Activated naive CD4-positive, alpha-beta T cell treated with anti-CD3 and anti-CD28 coated beads for 36 hours (primary cell): ENCODE measurements at regions of chr1 and their contacts with region 1.

Region 1: DNA sequence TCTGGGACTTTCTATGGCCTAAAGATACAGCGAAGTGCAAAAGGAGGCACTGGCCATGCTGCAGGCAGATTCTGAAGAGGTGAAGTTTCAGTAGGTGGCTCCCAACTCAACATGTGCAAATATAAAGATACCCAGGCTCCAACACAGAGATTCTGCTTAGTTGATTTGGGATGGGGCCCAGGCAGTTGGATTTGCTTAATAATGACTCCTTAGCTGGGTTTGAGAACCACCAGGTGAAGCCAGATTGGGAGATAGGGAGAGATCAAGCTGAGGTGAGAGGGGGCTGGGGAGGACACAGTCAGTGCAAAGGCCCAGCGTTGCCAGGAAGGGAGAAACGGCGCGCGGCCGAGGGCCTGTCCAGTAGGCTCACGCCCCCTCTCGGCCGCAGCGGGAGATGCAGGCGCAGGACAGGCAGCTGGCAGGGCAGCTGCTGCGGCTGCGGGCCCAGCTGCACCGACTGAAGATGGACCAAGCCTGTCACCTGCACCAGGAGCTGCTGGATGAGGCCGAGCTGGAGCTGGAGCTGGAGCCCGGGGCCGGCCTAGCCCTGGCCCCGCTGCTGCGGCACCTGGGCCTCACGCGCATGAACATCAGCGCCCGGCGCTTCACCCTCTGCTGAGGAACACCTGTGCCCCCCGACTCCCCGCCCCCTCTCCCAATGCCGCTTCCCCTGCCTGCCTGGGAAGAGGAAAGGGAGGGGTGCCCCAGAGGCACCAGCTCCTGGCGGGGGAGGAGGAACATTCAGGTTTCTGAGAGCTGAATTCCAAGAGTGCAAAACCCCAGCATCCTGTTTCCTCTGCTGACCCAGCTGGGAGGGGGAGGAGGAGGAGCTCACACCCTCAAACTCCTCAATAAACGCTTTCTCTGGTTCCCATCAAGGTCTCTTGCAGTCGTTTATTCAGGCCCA is 1.2 kb downstream of the FAM167B start:
- DNase-seq: peak; percentile 87
- H3K4me3 Mint-ChIP-seq: peak overlapping the region; percentile 49
- H3K27ac Mint-ChIP-seq: peak overlapping the region; percentile 100
- H3K4me1 Mint-ChIP-seq: peaks cover 46% of the 10 kb centered on the region
- H3K27me3 Mint-ChIP-seq: no peaks in the 10 kb centered on the region

Region 2: GRCh38 chr1:31785020-31785946 is 463.0 kb before region 1 on chr1:
- CTCF ChIA-PET with region 1: no interaction called
- intact Hi-C with region 1: no loop called
- DNase-seq: no peak
- H3K4me3 Mint-ChIP-seq: no peak overlapping the region
- H3K27ac Mint-ChIP-seq: no peak overlapping the region
- H3K4me1 Mint-ChIP-seq: peaks cover 6% of the 10 kb centered on the region
- H3K27me3 Mint-ChIP-seq: no peaks in the 10 kb centered on the region

Region 3: GRCh38 chr1:31944205-31945089 is 303.8 kb before region 1 on chr1:
- CTCF ChIA-PET with region 1: no interaction called
- intact Hi-C with region 1: loop called (anchors 2 kb)
- DNase-seq: peak; percentile 91
- H3K4me3 Mint-ChIP-seq: peak overlapping the region; percentile 74
- H3K27ac Mint-ChIP-seq: peak overlapping the region; percentile 88
- H3K4me1 Mint-ChIP-seq: peaks cover 66% of the 10 kb centered on the region
- H3K27me3 Mint-ChIP-seq: no peaks in the 10 kb centered on the region

Region 4: DNA sequence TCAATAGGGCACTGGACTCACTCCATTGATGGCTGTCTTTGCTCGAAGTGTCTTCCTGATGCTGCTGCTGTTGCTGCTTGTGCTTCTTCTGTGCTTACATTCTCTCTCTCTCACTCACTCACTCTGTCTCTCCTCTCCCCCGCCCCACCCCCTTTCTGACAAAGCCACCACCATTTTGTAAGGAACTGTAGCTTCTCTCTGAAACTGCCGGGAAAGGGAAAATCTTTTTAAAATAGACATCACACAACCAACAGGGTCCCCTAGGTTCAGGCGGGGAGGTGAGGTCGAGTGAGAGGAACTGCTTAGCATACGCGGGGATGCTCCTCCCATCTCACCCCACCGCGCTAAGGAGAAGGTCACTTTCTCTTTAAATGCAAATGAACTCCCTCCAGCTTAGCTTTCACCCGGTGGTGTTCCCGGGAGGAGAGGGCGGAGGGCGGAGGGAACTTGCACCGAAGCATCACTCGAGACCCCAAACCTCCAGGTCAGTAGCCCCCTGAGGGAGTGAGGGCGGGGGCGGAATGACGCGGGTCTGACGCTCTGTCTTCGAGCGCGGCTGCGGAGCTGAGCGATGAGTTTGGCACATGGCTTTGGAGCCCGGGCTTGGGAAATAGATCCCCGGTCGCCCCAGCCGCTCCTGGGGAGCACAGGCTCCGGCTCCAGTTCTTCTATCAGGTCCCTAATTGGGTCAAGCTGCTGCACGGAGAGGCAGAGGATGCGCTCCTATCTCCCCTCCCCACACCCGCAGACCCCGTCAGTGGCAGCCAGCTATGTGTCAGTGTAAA is 47.8 kb before region 1 on chr1 and contains the start of gene CCDC28B:
- CTCF ChIA-PET with region 1: no interaction called
- intact Hi-C with region 1: loop called (anchors 1 kb)
- DNase-seq: peak; percentile 72
- H3K4me3 Mint-ChIP-seq: peak within 1 kb of the TSS; percentile 70
- H3K27ac Mint-ChIP-seq: peak within 1 kb of the TSS; percentile 88
- H3K4me1 Mint-ChIP-seq: peaks cover 38% of the 10 kb centered on the region
- H3K27me3 Mint-ChIP-seq: no peaks in the 10 kb centered on the region
- total RNA-seq, gene CCDC28B: 13.1 to 14.8 TPM

Region 5: DNA sequence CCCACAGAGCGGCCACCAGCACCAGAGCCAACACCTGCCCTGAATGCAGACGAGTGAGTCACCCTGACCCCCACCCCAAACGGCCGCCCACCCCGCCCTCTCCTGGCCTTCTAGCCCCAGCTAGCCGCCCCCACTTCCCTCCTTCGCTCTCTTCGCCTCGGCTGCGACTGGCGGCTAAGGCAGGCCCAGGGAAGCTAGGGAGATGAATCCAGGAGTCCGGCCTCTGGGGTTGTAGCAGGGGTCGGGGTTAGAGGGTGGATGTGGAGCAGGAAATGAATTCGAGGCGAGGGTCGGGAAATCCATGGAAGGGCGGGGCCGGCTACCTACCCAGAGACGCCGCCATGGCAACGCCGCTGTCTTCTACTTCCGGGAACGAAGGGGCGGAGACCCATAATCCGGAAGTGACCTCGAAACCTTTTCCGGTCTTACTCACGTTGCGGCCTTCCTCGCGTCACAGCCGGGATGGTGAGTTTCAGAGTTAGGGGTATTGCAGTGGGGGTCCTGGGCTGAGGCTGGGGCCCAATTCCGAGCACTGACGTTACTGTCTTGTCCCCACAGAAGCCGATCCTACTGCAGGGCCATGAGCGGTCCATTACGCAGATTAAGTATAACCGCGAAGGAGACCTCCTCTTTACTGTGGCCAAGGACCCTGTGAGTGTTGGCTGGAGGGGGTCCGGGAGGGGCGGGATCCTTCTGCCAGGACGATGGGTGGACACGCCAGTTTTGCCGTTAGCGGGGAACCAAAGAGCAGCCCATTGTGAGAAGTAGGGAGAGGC is 26.1 kb before region 1 on chr1 and contains the starts of genes EIF3I and TMEM234:
- CTCF ChIA-PET with region 1: interaction called, 42 read pairs
- intact Hi-C with region 1: loop called (anchors 1 kb)
- DNase-seq: peak; percentile 96
- H3K4me3 Mint-ChIP-seq: peak within 1 kb of the TSS; percentile 95
- H3K27ac Mint-ChIP-seq: peak within 1 kb of the TSS; percentile 97
- H3K4me1 Mint-ChIP-seq: peaks cover 35% of the 10 kb centered on the region
- H3K27me3 Mint-ChIP-seq: no peaks in the 10 kb centered on the region
- total RNA-seq, gene EIF3I: 382 to 391 TPM
- total RNA-seq, gene TMEM234: 5.1 to 6.4 TPM

Region 6: GRCh38 chr1:32273388-32274208 is 25.4 kb after region 1 on chr1:
- CTCF ChIA-PET with region 1: interaction called, 4 read pairs
- intact Hi-C with region 1: loop called (anchors 1 kb)
- DNase-seq: peak; percentile 95
- H3K4me3 Mint-ChIP-seq: peak overlapping the region; percentile 62
- H3K27ac Mint-ChIP-seq: peak overlapping the region; percentile 91
- H3K4me1 Mint-ChIP-seq: peaks cover 63% of the 10 kb centered on the region
- H3K27me3 Mint-ChIP-seq: no peaks in the 10 kb centered on the region

Region 7: DNA sequence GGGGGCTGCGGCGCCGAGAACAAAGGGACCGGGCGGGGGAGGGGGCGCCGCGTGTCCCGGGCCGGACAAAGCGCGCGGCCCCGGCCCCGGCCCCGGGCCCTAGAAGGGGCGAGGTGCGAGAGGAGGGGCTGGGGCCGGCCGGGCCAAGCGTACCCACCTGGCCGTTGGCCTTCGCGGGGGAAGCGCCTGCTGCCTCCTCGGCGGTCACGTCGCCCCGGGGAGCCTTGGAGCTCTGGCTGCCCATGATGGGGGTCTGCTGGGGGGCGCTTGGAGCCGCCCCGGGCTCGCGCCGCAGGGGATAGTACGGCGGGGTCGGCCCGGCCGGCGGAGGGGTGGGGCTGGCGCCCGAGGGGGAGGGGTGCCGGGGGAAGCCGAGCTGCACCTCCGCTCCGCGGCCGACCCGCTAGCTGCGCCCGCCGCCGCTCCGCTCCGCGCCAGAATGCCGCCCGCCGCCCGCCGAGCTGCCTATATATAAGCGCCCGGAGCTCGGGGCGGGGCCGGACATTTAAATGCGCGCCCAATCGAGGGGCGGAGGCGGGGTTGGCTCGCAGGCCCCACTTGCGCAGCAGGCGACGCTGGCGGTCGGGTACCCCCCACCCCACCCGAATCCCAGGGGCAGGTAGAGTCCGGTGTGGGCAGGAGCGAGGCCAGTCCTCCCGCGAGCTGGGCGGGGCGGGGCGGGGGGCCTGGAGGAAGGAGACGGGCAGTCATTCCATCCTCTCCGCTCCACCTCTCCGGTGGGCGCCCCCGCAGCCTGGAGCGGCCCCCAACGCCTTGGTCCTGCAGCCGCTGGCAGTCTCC is 87.8 kb after region 1 on chr1 and contains the start of gene MARCKSL1:
- CTCF ChIA-PET with region 1: interaction called, 4 read pairs
- intact Hi-C with region 1: loop called (anchors 2 kb)
- DNase-seq: peak; percentile 67
- H3K4me3 Mint-ChIP-seq: peak within 1 kb of the TSS; percentile 75
- H3K27ac Mint-ChIP-seq: peak within 1 kb of the TSS; percentile 37
- H3K4me1 Mint-ChIP-seq: peaks cover 51% of the 10 kb centered on the region
- H3K27me3 Mint-ChIP-seq: no peaks in the 10 kb centered on the region
- total RNA-seq, gene MARCKSL1: 14.4 to 15.9 TPM

Region 8: GRCh38 chr1:32981003-32981901 is 733.0 kb after region 1 on chr1:
- CTCF ChIA-PET with region 1: no interaction called
- intact Hi-C with region 1: loop called (anchors 10 kb)
- DNase-seq: peak; percentile 85
- H3K4me3 Mint-ChIP-seq: peak overlapping the region; percentile 30
- H3K27ac Mint-ChIP-seq: peak overlapping the region; percentile 91
- H3K4me1 Mint-ChIP-seq: peaks cover 44% of the 10 kb centered on the region
- H3K27me3 Mint-ChIP-seq: no peaks in the 10 kb centered on the region